ENCODE measurements at regions of chrX and their contacts with region 1.

Region 1: GRCh38 chrX:16577483-16578029 is 72.4 kb upstream of the S100G start:
- DNase-seq: no peak
- ATAC-seq: peak; percentile 67
- H3K4me3 Mint-ChIP-seq: peak overlapping the region; percentile 70
- H3K27ac Mint-ChIP-seq: peak overlapping the region; percentile 100
- H3K4me1 Mint-ChIP-seq: peaks cover 32% of the 10 kb centered on the region
- H3K27me3 Mint-ChIP-seq: no peaks in the 10 kb centered on the region
- CTCF ChIP-seq: no peak

Region 2: GRCh38 chrX:16516232-16516876 is 61.2 kb before region 1 on chrX:
- CTCF ChIA-PET with region 1: no interaction called
- POLR2A ChIA-PET with region 1: no interaction called
- DNase-seq: no peak
- ATAC-seq: no peak
- H3K4me3 Mint-ChIP-seq: no peak overlapping the region
- H3K27ac Mint-ChIP-seq: no peak overlapping the region
- H3K4me1 Mint-ChIP-seq: peaks cover 23% of the 10 kb centered on the region
- H3K27me3 Mint-ChIP-seq: no peaks in the 10 kb centered on the region; the same call in none of the 2 replicates
- CTCF ChIP-seq: no peak

Region 3: DNA sequence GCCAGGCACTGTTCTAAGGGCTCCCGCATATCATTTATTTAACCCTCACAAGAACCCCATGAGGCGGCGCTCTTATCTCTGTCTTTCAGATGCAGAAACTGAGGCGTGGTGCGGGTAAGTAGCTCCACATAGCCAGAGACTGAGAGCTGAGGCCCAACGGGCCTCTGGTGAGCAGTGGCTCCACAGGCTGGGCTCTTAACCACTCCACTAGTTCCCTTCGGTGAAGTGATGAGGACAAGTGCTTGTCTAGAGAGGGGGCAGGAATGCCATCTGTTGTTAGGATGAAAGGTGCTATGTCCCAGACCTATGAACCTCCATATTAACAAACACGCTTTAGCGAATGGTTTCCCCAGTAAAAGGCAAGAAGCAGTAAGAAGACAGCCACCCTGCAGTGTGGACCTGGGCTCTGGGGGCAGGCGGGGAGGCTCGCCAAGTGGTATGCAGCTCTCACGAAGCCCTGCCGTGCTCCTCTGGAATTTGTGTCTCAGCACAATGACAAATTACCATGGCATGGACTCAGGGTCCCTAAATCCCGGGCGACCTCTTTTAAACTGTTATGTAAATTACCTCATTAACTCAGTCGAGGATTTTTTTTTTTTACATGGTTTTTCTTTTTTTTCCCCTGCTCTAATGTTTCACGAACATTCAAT is 51.5 kb after region 1 on chrX:
- CTCF ChIA-PET with region 1: no interaction called
- POLR2A ChIA-PET with region 1: interaction called, 13 read pairs
- DNase-seq: peak; percentile 50
- ATAC-seq: peak; percentile 86
- H3K4me3 Mint-ChIP-seq: no peak overlapping the region; the same call in 1 of the 2 replicates
- H3K27ac Mint-ChIP-seq: peak overlapping the region; percentile 96
- H3K4me1 Mint-ChIP-seq: peaks cover 28% of the 10 kb centered on the region
- H3K27me3 Mint-ChIP-seq: no peaks in the 10 kb centered on the region
- CTCF ChIP-seq: no peak

Region 4: DNA sequence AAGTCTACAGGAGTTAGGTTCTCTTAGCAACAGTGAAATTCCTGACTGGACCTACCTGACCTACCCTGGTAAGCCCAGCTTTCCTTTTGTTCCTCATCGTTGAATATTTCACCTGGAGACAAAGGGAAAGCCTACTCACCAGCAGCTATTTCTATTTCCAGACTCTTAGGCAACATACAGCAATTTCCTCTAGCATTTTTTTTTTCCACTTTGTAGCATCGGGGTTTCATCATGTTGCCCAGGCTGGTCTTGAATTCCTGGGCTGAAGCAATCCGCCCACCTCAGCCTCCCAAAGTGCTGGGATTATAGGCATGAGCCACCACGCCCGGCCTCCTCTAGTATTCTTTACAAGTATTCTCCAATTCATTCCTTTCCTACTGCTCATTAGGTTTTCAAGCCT is 65.6 kb after region 1 on chrX:
- CTCF ChIA-PET with region 1: no interaction called
- POLR2A ChIA-PET with region 1: no interaction called
- DNase-seq: no peak
- ATAC-seq: peak; percentile 36; the same call in 1 of the 2 replicates
- H3K4me3 Mint-ChIP-seq: no peak overlapping the region
- H3K27ac Mint-ChIP-seq: peak overlapping the region; percentile 54; the same call in 1 of the 2 replicates
- H3K4me1 Mint-ChIP-seq: peaks cover 23% of the 10 kb centered on the region
- H3K27me3 Mint-ChIP-seq: no peaks in the 10 kb centered on the region
- CTCF ChIP-seq: no peak

Measured in WTC11 (cell line).